BJ (cell line): ENCODE measurements at regions of chr2 and their contacts with region 1.

Region 1: DNA sequence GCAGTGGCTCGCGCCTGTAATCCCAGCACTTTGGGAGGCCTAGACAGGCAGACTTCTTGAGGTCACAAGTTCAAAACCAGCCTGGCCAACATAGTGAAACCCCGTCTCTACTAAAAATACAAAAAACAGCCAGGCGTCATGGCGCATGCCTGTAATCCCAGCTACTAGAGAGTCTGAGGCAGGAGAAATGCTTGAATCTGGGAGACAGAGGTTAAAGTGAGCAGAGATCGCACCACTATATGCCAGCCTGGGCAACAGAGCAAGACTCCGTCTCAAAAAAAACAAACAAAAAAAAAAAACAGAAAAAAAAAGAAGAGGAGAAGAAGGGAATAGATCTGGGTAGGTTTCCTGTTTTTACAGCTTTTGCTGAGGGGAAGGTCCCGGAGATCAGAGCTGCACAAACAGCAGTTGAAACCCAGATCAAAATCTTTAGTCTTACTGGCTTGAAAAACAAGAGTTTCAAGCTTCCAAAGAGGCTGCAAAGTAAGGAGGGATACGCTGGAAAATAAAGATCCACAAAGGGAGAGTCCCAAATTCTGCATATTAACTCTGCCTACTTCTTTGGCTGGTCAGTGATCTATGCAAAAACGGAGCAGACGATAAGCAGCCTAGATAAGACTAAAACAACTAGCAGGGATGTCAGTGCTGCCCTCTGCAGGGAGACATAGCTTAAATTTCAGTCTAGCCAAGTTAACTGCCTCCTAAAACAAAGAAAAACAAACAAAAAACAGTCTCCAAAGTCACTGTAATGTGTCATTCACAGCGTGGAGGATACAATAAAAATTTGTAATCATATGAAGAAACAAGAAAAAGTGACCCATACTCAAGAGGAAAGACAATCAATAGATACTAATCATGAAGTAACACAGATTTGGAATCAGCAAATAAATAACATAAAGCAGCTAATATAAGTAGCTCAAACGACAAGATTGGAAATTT is 74.1 kb downstream of the TLK1 start:
- DNase-seq: peak; percentile 11
- H3K4me3 ChIP-seq: no peak overlapping the region
- H3K27me3 ChIP-seq: no peaks in the 10 kb centered on the region
- CTCF ChIP-seq: peak; percentile 72

Region 2: DNA sequence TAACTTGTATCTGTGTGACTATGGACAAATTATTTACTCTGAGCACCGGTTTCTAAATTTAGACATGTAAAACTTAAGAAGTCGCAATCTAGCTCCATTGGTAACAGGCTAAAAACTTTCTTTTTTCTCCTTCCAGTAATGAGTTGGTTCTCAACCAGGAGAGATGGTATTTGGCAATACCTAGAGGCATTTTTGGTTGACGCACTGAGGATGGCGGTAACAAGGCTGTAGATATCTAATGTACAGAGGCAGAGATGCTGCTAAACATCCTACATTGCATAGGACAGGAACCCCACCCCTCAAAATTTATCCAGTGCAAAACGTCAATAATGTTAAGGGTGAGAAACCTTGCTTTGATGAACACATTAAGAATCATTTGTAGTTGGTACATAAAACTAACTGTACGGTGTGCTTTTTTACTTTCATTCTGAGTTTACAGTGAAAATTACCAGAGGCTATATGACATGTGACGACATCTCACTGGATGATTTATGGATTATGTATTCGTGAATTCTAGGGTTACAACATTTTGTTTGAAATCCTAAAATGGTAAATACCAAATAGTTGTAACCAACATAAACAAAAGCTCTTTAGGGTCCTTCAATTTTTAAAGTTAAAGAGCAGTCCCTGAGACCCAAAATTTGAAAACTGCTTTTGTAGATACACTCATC is 17.2 kb before region 1 on chr2:
- CTCF ChIA-PET with region 1: interaction called, 24 read pairs
- POLR2A ChIA-PET with region 1: no interaction called
- DNase-seq: no peak
- H3K4me3 ChIP-seq: no peak overlapping the region
- H3K27me3 ChIP-seq: no peaks in the 10 kb centered on the region
- CTCF ChIP-seq: no peak

Region 3: DNA sequence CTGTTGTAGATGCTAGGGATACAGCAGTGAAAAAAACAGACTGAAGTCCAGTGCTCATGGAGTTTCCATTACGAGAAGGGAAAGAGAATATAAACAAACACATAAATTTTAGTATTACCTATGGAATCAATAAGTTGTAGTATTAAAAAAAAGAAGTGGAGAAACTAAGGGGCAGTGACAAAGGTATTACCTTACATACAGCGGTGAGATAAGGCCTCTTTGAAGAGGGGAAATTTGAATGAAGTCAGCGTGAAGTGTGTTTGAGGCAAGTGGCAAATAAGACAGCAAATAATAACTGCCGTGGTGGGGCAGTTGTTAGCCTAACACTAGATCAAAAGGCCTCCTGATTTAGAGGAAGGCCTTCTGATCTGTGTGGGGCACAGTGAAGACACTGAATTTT is 16.2 kb after region 1 on chr2:
- CTCF ChIA-PET with region 1: interaction called, 10 read pairs
- POLR2A ChIA-PET with region 1: no interaction called
- DNase-seq: no peak
- H3K4me3 ChIP-seq: no peak overlapping the region
- H3K27me3 ChIP-seq: no peaks in the 10 kb centered on the region
- CTCF ChIP-seq: no peak